Activated CD4-positive, alpha-beta T cell treated with anti-CD3 and anti-CD28 coated beads, Interleukin-2, amount 10 ng/mL, durations not matched to agents 24 days and 14 days (primary cell): ENCODE measurements at regions of chr2 and their contacts with region 1.

Region 1: GRCh38 chr2:168773719-168774521 is 28.5 kb upstream of the NOSTRIN start:
- DNase-seq: peak; percentile 80
- H3K4me3 Mint-ChIP-seq: no peak overlapping the region
- H3K27ac Mint-ChIP-seq: no peak overlapping the region
- H3K4me1 Mint-ChIP-seq: no peaks in the 10 kb centered on the region
- H3K27me3 Mint-ChIP-seq: no peaks in the 10 kb centered on the region

Region 2: DNA sequence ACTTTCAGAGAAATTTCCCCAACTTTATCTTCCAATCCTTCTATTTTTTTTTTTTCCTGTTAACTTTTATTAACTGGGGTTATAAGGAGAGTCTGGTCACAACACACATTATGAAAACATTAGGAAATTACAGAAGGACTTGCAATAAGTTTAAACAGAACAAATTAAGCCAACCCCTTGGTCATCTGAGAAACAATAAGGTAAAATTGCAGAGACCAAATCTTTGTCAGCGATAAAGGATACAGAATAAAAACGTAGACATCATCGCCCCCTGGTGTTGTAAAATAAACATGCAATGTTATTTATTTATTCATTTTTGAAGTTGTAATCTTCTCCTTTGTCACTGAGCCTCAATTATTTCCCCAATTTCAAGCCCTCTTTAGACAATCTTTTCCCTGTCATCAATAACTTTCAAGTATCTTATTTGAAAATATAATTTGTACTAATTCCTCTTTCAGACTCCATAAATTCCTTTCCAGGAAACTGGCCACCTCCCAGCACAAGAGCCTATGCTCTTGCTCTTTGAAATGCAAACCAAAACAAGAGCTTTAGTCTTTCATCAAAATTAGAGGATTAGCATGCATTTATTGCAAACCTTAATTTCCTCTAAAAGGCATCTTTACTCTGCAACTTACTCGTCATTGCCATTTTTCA is 146.7 kb after region 1 on chr2:
- intact Hi-C with region 1: loop called (anchors 1 kb)
- DNase-seq: peak; percentile 66
- H3K4me3 Mint-ChIP-seq: no peak overlapping the region
- H3K27ac Mint-ChIP-seq: no peak overlapping the region
- H3K4me1 Mint-ChIP-seq: peaks cover 2% of the 10 kb centered on the region
- H3K27me3 Mint-ChIP-seq: peaks cover 37% of the 10 kb centered on the region